OCI-LY7 (cell line): ENCODE measurements at regions of chr12 and their contacts with region 1.

Region 1: GRCh38 chr12:31362759-31363415 is 36.9 kb upstream of the SINHCAF start:
- DNase-seq: peak; percentile 79
- H3K4me3 ChIP-seq: peak overlapping the region; percentile 13
- H3K27ac ChIP-seq: peak overlapping the region; percentile 25
- H3K4me1 ChIP-seq: peaks cover 22% of the 10 kb centered on the region
- CTCF ChIP-seq: peak; percentile 54; the same call in 1 of the 2 replicates

Region 2: GRCh38 chr12:31250179-31250578 is 112.7 kb before region 1 on chr12:
- CTCF ChIA-PET with region 1: no interaction called
- POLR2A ChIA-PET with region 1: no interaction called
- intact Hi-C with region 1: loop called (anchors 2 kb)
- DNase-seq: peak; percentile 12
- H3K4me3 ChIP-seq: no peak overlapping the region
- H3K27ac ChIP-seq: no peak overlapping the region
- H3K4me1 ChIP-seq: peaks cover 9% of the 10 kb centered on the region
- CTCF ChIP-seq: peak; percentile 49

Region 3: DNA sequence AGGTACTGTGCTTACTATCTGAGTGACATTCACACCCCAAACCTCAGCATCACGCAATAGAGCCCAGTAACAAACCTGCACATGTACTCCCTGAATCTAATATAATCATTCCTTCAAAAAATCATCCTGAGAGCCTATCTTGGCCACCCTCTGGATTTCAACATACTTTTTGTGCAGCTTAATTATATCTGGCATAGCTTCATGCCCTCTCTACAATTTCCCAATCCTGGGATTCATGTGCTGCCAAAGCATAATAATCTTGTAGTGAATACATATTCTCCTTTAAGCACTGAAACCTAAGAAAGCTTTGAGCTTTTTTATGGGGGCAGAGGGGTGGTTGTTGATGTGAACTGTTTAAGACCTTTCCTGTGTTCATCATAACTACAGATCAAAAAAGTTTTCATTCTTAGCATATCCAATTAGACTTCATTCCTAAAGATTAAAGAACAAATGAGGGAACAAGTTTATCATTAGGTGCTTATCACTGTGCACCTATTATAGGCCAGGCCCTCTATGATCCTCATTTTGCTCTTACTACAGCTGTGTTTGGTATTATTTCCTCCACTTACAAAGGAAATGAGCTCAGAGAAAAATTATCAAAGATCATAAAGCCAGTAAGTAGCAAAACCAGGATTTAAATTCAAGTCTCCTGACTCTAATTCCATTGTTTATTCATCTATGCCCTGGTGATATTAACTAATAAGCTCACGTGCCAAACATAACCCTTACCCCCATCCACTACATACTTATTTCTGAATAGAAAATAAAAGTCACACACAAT is 88.2 kb before region 1 on chr12:
- CTCF ChIA-PET with region 1: interaction called, 9 read pairs
- POLR2A ChIA-PET with region 1: no interaction called
- intact Hi-C with region 1: loop called (anchors 1 kb)
- DNase-seq: no peak
- H3K4me3 ChIP-seq: no peak overlapping the region
- H3K27ac ChIP-seq: no peak overlapping the region
- H3K4me1 ChIP-seq: no peaks in the 10 kb centered on the region
- CTCF ChIP-seq: no peak

Region 4: GRCh38 chr12:31288381-31288780 is 74.5 kb before region 1 on chr12:
- CTCF ChIA-PET with region 1: no interaction called
- POLR2A ChIA-PET with region 1: no interaction called
- intact Hi-C with region 1: no loop called
- DNase-seq: no peak
- H3K4me3 ChIP-seq: no peak overlapping the region
- H3K27ac ChIP-seq: no peak overlapping the region
- H3K4me1 ChIP-seq: no peaks in the 10 kb centered on the region
- CTCF ChIP-seq: no peak